ENCODE measurements at regions of chr14 and their contacts with region 1.

Region 1: GRCh38 chr14:60184146-60184904 is 19.1 kb upstream of the DHRS7 start:
- DNase-seq: no peak
- H3K4me3 Mint-ChIP-seq: peak overlapping the region; percentile 58
- H3K27ac Mint-ChIP-seq: peak overlapping the region; percentile 85
- H3K4me1 Mint-ChIP-seq: peaks cover 17% of the 10 kb centered on the region
- H3K27me3 Mint-ChIP-seq: no peaks in the 10 kb centered on the region

Region 2: DNA sequence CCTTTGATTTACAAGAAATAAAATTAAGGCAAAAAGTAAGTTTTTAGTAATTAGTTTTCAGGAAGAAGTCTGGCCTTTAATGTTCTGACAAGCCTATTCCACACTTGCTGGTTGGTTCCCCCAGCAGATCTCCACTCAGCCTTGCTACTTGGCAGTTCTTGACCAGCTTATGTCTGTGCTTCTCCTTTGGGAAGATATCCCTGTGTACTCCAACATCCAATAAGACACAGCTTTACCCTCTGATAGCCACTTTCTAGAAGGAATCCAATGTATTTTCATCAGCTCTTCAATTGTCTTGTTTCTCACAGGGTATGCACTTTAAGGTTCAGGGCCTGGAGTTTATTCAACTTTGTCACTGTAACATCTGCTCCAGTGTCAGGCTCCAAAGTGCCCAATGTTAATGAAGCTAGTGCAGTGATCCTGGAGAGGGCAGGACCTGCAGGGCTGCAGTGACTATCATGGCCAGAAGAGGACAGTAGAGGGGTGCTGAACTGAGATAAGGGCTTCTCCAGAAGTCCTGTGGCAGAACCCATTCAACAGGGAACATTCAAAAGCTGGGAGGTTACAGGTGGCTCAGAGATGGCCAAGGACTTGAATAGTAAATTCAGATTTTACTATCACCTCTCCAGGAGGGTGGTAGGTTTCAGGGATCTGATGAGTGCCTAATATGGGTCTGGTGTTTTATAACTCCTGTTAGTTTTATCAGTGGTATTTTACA is 677.1 kb before region 1 on chr14:
- CTCF ChIA-PET with region 1: interaction called, 4 read pairs
- POLR2A ChIA-PET with region 1: no interaction called
- intact Hi-C with region 1: loop called (anchors 1 kb)
- DNase-seq: peak; percentile 70
- H3K4me3 Mint-ChIP-seq: no peak overlapping the region
- H3K27ac Mint-ChIP-seq: no peak overlapping the region
- H3K4me1 Mint-ChIP-seq: peaks cover 9% of the 10 kb centered on the region
- H3K27me3 Mint-ChIP-seq: peaks cover 1% of the 10 kb centered on the region

Region 3: GRCh38 chr14:59632381-59632780 is 551.9 kb before region 1 on chr14:
- CTCF ChIA-PET with region 1: interaction called, 8 read pairs
- POLR2A ChIA-PET with region 1: no interaction called
- intact Hi-C with region 1: loop called (anchors 2 kb)
- DNase-seq: peak; percentile 37
- H3K4me3 Mint-ChIP-seq: no peak overlapping the region
- H3K27ac Mint-ChIP-seq: no peak overlapping the region
- H3K4me1 Mint-ChIP-seq: peaks cover 3% of the 10 kb centered on the region
- H3K27me3 Mint-ChIP-seq: peaks cover 48% of the 10 kb centered on the region

Region 4: GRCh38 chr14:60064491-60065072 is 119.7 kb before region 1 on chr14:
- CTCF ChIA-PET with region 1: interaction called, 68 read pairs
- POLR2A ChIA-PET with region 1: no interaction called
- intact Hi-C with region 1: loop called (anchors 1 kb)
- DNase-seq: no peak
- H3K4me3 Mint-ChIP-seq: no peak overlapping the region
- H3K27ac Mint-ChIP-seq: no peak overlapping the region
- H3K4me1 Mint-ChIP-seq: no peaks in the 10 kb centered on the region
- H3K27me3 Mint-ChIP-seq: peaks cover 4% of the 10 kb centered on the region

Region 5: GRCh38 chr14:60106339-60106738 is 78.0 kb before region 1 on chr14:
- CTCF ChIA-PET with region 1: no interaction called
- POLR2A ChIA-PET with region 1: no interaction called
- intact Hi-C with region 1: no loop called
- DNase-seq: no peak
- H3K4me3 Mint-ChIP-seq: no peak overlapping the region
- H3K27ac Mint-ChIP-seq: no peak overlapping the region
- H3K4me1 Mint-ChIP-seq: peaks cover 19% of the 10 kb centered on the region
- H3K27me3 Mint-ChIP-seq: no peaks in the 10 kb centered on the region

Region 6: GRCh38 chr14:60164712-60165546 is 19.4 kb before region 1 on chr14 and contains the start of gene DHRS7:
- CTCF ChIA-PET with region 1: interaction called, 11 read pairs
- POLR2A ChIA-PET with region 1: interaction called, 3 read pairs
- intact Hi-C with region 1: loop called (anchors 1 kb)
- DNase-seq: peak; percentile 79
- H3K4me3 Mint-ChIP-seq: peak within 1 kb of the TSS; percentile 94
- H3K27ac Mint-ChIP-seq: peak within 1 kb of the TSS; percentile 97
- H3K4me1 Mint-ChIP-seq: peaks cover 37% of the 10 kb centered on the region
- H3K27me3 Mint-ChIP-seq: no peaks in the 10 kb centered on the region
- total RNA-seq, gene DHRS7: 70.3 to 74.7 TPM